ENCODE measurements at regions of chr12 and their contacts with region 1.

Region 1: GRCh38 chr12:46983393-46984266 is 95.8 kb upstream of the PCED1B start:
- H3K4me3 ChIP-seq: no peak overlapping the region
- H3K27ac ChIP-seq: no peak overlapping the region
- H3K4me1 ChIP-seq: no peaks in the 10 kb centered on the region
- CTCF ChIP-seq: peak; percentile 35; the same call in 1 of the 2 replicates

Region 2: GRCh38 chr12:46963977-46964971 is 19.4 kb before region 1 on chr12:
- CTCF ChIA-PET with region 1: interaction called, 18 read pairs
- POLR2A ChIA-PET with region 1: no interaction called
- H3K4me3 ChIP-seq: no peak overlapping the region
- H3K27ac ChIP-seq: no peak overlapping the region
- H3K4me1 ChIP-seq: no peaks in the 10 kb centered on the region
- CTCF ChIP-seq: no peak

Region 3: DNA sequence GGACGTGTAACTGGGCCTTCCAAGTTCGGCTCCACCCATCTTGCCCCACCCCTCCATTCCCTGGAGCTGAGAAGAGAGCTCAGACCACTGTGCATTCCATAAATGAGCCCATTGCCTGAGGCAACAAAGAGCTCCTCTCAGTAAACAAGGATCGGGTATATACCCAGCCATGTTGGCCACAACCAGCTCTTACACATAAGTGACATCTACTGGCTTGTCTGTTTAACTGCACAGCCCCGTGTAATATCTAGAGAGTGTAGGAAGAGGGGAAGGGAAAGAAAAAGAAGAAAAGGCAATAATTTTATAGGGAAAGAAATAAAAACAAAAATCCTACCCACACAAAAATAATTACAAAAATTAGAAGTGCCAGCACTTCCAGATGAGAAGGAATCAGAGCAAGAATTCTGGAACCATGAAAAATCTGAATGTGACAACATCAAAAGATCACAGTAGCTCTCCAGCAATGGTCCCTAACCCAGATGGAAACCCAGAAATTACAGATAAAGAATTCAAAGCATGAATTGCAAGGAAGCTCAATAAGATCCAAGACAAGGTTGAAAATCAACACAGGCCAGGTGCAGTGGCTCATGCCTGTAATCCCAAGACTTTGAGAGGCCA is 414.1 kb after region 1 on chr12:
- CTCF ChIA-PET with region 1: interaction called, 14 read pairs
- POLR2A ChIA-PET with region 1: no interaction called
- H3K4me3 ChIP-seq: no peak overlapping the region
- H3K27ac ChIP-seq: no peak overlapping the region
- H3K4me1 ChIP-seq: 0 out of 2 replicates have a peak, but pooled peaks cover 3% of the 10 kb centered on the region
- CTCF ChIP-seq: no peak; the same call in none of the 2 replicates